Heart right ventricle (tissue), 16 donors: ENCODE measurements at regions of chr5 and their contacts with region 1.

Region 1: GRCh38 chr5:159286420-159287035 is 23.4 kb downstream of the UBLCP1 start:
- DNase-seq: no peak
- ATAC-seq: peak in 1 of 8 donors; percentile 50
- H3K4me3 ChIP-seq: no peak overlapping the region
- H3K27ac ChIP-seq: no peak overlapping the region
- H3K4me1 ChIP-seq: peaks cover 0 to 5% (median 0%) of the 10 kb centered on the region in 9 donors
- H3K27me3 ChIP-seq: no peaks in the 10 kb centered on the region
- CTCF ChIP-seq: peak in 8 of 9 donors; percentile 32 to 67 (median 54)

Region 2: DNA sequence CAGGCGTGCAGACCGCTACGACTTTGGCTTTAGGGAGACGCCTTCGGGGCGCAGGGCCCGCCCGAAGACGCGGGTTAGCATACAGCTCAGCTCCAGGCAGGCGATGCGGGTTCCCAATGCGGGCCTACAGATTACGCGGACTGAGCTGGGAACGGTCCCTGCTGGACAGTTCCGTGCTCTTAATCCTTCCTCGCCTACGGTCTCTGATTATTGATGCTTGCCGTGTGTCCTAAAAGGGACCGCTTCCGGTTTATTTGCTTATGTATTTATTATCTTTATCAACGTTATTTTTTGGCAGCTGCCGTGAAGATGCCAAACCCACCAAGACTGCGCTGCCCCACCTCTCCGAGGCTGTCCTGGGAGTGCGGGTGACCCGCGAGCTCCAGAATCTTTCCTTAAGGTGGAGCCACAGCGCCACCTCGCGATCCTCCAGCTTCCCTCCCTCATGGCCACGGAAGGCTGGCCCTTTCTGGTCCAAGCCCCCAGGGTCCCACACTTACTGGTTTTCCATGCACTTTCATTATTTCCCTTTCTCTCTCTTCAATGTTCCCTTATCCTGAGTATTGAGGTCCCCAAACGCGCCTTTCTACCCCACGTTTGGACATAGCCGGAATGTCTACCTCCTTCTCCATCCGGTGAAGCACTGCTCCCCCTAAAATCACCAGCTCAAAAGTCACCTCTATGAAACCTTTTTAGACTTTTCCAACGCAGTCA is 179.8 kb before region 1 on chr5:
- intact Hi-C with region 1: no loop called
- DNase-seq: peak; percentile 81 to 85
- ATAC-seq: peak; percentile 84 to 93 (median 90)
- H3K4me3 ChIP-seq: peak overlapping the region in 9 of 10 donors; percentile 1 to 55 (median 41)
- H3K27ac ChIP-seq: peak overlapping the region in 4 of 10 donors; percentile 1 to 35 (median 20)
- H3K4me1 ChIP-seq: peaks cover 0 to 51% (median 27%) of the 10 kb centered on the region in 9 donors
- H3K27me3 ChIP-seq: peaks cover 4 to 82% (median 48%) of the 10 kb centered on the region in 7 donors
- CTCF ChIP-seq: peak; percentile 71 to 97 (median 96)

Region 3: GRCh38 chr5:159965031-159965837 is 678.7 kb after region 1 on chr5:
- intact Hi-C with region 1: loop called in 1 of 10 experiments (anchors 10 kb)
- DNase-seq: peak; percentile 39 to 52
- ATAC-seq: peak in 7 of 8 donors; percentile 60 to 86 (median 74)
- H3K4me3 ChIP-seq: no peak overlapping the region
- H3K27ac ChIP-seq: no peak overlapping the region
- H3K4me1 ChIP-seq: peaks cover 0 to 3% (median 0%) of the 10 kb centered on the region in 9 donors
- H3K27me3 ChIP-seq: peaks cover 0 to 39% (median 5%) of the 10 kb centered on the region in 7 donors
- CTCF ChIP-seq: peak; percentile 16 to 77 (median 68)